ENCODE measurements at regions of chr14 and their contacts with region 1.

Region 1: DNA sequence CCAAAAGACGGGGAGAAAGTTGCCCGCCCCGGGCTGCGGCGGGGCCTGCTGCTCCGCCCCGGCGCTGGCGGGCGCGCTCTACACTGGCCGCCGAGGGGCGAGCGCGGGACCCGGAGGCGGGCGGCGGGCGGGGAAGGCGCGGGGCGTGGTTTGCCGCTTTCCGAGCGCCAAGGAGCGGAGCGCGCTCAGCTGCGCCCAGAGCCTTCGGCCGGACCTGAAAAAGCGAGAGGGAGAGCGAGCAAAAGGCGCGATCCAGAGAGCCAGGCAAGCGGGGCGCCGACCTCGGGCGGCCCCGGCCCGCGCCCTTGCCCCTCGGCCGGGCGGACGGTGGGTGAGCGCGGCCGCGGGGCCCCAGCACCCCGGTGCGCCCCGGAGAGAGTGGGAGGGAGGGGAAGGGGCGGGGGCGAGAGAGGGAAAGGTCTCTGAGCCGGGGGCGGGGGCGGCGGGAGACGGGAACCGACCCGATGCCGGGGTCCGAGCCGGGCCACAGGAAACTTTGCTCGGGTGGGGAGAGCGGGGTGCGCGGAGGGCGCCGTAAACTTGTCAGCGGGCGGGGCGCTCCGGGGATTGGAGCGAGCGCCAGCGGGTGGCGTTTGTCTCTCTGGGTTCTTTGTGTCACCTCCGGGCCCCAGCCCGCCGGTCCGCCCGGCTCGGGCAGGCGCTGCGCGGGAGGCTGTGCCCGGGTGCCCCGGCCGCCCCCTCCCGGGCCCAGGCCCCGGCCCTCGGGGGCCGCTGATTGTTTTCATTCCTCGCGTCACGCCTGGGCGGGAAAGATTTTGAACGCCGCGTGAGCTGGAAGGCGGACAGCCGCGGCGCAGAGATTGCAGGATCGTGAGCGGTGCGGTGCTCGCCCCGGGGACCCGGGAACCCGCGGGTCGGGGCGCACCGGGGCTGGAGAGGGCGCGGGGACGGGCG is at the start of gene SYNE2:
- DNase-seq: peak; percentile 84
- ATAC-seq: peak; percentile 88
- H3K4me3 Mint-ChIP-seq: peak within 1 kb of the TSS; percentile 95
- H3K27ac Mint-ChIP-seq: peak within 1 kb of the TSS; percentile 93
- H3K4me1 Mint-ChIP-seq: peaks cover 39% of the 10 kb centered on the region
- H3K27me3 Mint-ChIP-seq: no peaks in the 10 kb centered on the region
- CTCF ChIP-seq: no peak
- total RNA-seq, gene SYNE2: 28.1 to 29.0 TPM

Region 2: DNA sequence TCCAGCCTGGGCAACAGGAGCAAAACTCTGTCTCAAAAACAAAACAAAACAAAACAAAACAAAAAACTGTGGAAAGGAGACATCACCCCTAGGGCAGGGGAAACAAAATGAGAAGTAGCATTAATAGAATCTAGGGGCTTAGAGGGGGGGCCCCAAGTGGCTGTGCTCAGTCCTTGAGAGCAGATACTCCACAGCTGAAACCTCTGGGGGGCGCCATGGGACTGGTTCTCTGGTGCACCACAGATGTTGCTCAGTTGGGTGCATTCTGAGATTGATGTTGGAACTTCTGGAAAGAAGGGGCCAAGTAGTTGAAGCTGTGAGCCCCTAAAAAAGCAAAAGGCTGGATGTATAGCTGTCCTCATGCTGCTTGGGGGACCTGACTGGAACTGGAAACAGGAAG is 12.1 kb before region 1 on chr14:
- CTCF ChIA-PET with region 1: interaction called, 10 read pairs
- POLR2A ChIA-PET with region 1: interaction called, 3 read pairs
- intact Hi-C with region 1: no loop called
- DNase-seq: peak; percentile 77
- ATAC-seq: peak; percentile 74
- H3K4me3 Mint-ChIP-seq: no peak overlapping the region
- H3K27ac Mint-ChIP-seq: no peak overlapping the region
- H3K4me1 Mint-ChIP-seq: no peaks in the 10 kb centered on the region
- H3K27me3 Mint-ChIP-seq: no peaks in the 10 kb centered on the region
- CTCF ChIP-seq: peak; percentile 34

Region 3: GRCh38 chr14:63867933-63868921 is 15.2 kb after region 1 on chr14:
- CTCF ChIA-PET with region 1: interaction called, 14 read pairs
- POLR2A ChIA-PET with region 1: interaction called, 13 read pairs
- intact Hi-C with region 1: loop called (anchors 1 kb)
- DNase-seq: peak; percentile 32
- ATAC-seq: no peak
- H3K4me3 Mint-ChIP-seq: peak overlapping the region; percentile 28
- H3K27ac Mint-ChIP-seq: peak overlapping the region; percentile 75
- H3K4me1 Mint-ChIP-seq: peaks cover 57% of the 10 kb centered on the region
- H3K27me3 Mint-ChIP-seq: no peaks in the 10 kb centered on the region
- CTCF ChIP-seq: no peak

Region 4: DNA sequence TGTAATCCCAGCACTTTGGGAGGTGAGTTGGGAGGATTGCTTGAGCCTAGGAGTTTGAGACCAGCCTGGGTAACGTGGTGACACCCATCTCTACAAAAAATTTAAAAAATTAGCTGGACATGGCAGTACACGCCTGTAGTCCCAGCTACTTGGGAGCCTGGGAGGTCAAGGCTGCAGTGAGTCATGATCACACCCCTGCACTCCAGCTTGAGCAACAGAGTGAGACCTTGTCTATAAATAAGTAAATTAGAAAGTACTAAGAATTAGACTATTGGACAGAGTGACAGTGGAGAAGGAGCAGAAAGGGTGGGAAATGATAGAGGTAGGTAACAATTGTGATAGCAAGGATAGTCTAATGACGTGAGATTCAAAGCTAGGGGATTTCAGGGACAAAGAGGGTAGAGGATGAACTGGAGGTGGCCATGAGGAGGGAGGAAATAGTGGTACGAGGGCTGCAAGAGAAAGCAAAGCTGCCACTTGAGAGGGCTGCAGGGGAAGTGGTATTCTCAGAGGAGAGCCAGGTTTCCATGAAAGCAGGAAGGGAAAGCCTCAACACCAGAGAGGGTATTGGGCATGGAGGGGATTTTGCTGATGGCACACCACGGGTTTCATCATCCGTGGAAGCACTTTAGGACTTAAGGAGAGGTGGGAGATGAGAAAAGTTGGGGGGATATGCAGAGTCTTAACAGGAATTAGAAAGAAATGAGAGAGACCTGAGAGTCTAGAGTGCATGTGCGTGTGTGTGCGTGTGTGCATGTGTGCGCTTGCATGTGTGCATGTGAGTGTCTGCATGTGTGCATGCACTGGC is 85.3 kb after region 1 on chr14:
- CTCF ChIA-PET with region 1: interaction called, 4 read pairs
- POLR2A ChIA-PET with region 1: interaction called, 3 read pairs
- intact Hi-C with region 1: loop called (anchors 5 kb)
- DNase-seq: peak; percentile 62
- ATAC-seq: peak; percentile 79
- H3K4me3 Mint-ChIP-seq: no peak overlapping the region
- H3K27ac Mint-ChIP-seq: no peak overlapping the region
- H3K4me1 Mint-ChIP-seq: peaks cover 32% of the 10 kb centered on the region
- H3K27me3 Mint-ChIP-seq: no peaks in the 10 kb centered on the region
- CTCF ChIP-seq: no peak